Activated CD4-positive, alpha-beta T cell treated with anti-CD3 and anti-CD28 coated beads for 36 hours (primary cell): ENCODE measurements at regions of chr1 and their contacts with region 1.

Region 1: DNA sequence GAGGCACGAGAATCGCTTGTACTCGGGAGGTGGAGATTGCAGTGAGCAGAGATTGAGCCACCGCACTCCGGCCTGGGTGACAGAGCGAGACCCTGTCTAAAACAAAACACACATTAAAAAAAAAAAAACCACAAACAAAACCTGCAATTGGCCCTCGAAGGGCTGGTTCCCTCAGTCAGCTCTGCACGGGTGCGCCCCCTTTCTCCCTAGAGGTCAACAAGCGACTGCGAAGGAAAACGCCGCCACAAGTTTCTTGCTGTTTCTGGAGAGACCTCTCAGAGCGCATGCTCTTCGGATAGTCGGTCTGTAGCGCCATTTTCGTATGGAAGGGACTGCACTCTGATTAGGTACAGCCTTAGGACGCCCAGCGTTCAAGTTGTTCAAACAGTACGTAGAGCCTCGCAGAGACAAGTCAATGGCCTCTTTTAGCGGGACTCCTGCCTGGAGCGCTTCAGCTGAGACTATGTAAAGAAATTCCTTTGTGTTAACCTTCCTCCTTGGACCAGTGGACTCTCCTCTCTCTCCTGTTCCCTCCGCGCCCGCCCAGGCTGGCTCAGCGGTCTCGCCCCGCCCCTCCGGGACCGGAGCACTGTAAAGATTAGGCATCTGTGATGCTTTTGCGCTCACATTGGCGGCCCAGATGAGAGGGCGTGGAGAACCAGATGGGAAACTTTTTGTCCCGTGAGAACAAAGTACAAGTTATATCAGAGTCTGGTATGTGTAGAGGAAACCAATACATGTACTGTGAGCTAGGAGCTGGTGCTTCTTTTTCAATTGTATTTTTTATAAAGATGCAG is 1.0 kb upstream of the CDC14A start:
- DNase-seq: peak; percentile 94
- ATAC-seq: peak; percentile 77
- H3K4me3 Mint-ChIP-seq: peak overlapping the region; percentile 97
- H3K27ac Mint-ChIP-seq: peak overlapping the region; percentile 97
- H3K4me1 Mint-ChIP-seq: peaks cover 25% of the 10 kb centered on the region
- H3K27me3 Mint-ChIP-seq: no peaks in the 10 kb centered on the region

Region 2: GRCh38 chr1:99849744-99850458 is 501.4 kb before region 1 on chr1 and contains the start of gene AGL:
- CTCF ChIA-PET with region 1: no interaction called
- POLR2A ChIA-PET with region 1: no interaction called
- intact Hi-C with region 1: loop called in 1 of 2 experiments (anchors 2 kb)
- DNase-seq: peak; percentile 93
- ATAC-seq: peak; percentile 97
- H3K4me3 Mint-ChIP-seq: peak within 1 kb of the TSS; percentile 94
- H3K27ac Mint-ChIP-seq: peak within 1 kb of the TSS; percentile 96
- H3K4me1 Mint-ChIP-seq: peaks cover 35% of the 10 kb centered on the region
- H3K27me3 Mint-ChIP-seq: no peaks in the 10 kb centered on the region
- total RNA-seq, gene AGL: 14.6 to 18.3 TPM

Region 3: GRCh38 chr1:100249537-100250257 is 101.6 kb before region 1 on chr1 and contains the start of gene DBT:
- CTCF ChIA-PET with region 1: no interaction called
- POLR2A ChIA-PET with region 1: no interaction called
- intact Hi-C with region 1: loop called (anchors 1 kb)
- DNase-seq: peak; percentile 96
- ATAC-seq: peak; percentile 100
- H3K4me3 Mint-ChIP-seq: no peak within 1 kb of the TSS
- H3K27ac Mint-ChIP-seq: no peak within 1 kb of the TSS
- H3K4me1 Mint-ChIP-seq: peaks cover 16% of the 10 kb centered on the region
- H3K27me3 Mint-ChIP-seq: no peaks in the 10 kb centered on the region
- total RNA-seq, gene DBT: 11.0 to 12.8 TPM

Region 4: DNA sequence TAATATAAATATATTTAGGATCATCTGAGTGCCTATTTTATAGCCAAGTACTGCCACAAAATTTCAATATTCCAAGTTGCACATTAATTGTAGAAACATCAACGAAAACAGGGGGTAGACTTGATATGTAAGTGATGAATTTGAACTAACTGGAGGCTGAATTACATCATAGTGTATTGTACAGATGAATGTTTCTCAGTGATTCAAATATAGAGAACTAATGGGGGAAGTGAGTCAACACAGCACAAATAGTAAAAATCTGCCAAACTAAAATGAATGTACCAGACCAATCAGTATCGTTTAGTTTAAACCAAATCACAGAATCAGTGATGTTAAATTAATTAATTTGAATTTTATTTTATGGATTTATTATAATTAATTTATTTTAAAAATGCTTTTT is 42.5 kb before region 1 on chr1:
- CTCF ChIA-PET with region 1: interaction called, 6 read pairs
- POLR2A ChIA-PET with region 1: no interaction called
- intact Hi-C with region 1: loop called in 1 of 2 experiments (anchors 2 kb)
- DNase-seq: no peak
- ATAC-seq: peak; percentile 63
- H3K4me3 Mint-ChIP-seq: no peak overlapping the region
- H3K27ac Mint-ChIP-seq: no peak overlapping the region
- H3K4me1 Mint-ChIP-seq: peaks cover 17% of the 10 kb centered on the region
- H3K27me3 Mint-ChIP-seq: no peaks in the 10 kb centered on the region

Region 5: DNA sequence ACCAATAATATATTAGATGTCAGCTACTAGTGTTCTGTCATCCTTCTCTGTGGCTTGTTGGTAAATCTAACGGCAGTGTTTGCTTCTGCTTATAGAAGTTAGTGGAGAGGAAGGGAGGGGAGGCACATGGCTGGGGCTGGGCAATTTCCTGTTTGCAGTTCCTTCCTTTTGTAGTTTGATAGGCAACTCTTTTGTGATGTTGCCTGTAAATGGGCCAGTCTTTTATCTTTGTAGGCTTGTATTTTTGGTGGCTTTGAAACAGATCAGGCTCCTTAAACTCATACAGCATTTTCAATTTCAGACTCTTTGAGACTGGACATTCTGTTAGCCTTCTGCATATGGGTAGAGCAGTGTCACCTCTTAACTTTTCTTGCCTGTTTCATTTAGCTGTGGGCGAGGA is 49.1 kb after region 1 on chr1:
- CTCF ChIA-PET with region 1: interaction called, 7 read pairs
- POLR2A ChIA-PET with region 1: interaction called, 7 read pairs
- intact Hi-C with region 1: loop called in 1 of 2 experiments (anchors 10 kb)
- DNase-seq: peak; percentile 67
- ATAC-seq: peak; percentile 51
- H3K4me3 Mint-ChIP-seq: peak overlapping the region; percentile 60
- H3K27ac Mint-ChIP-seq: peak overlapping the region; percentile 92
- H3K4me1 Mint-ChIP-seq: peaks cover 84% of the 10 kb centered on the region
- H3K27me3 Mint-ChIP-seq: no peaks in the 10 kb centered on the region

Region 6: DNA sequence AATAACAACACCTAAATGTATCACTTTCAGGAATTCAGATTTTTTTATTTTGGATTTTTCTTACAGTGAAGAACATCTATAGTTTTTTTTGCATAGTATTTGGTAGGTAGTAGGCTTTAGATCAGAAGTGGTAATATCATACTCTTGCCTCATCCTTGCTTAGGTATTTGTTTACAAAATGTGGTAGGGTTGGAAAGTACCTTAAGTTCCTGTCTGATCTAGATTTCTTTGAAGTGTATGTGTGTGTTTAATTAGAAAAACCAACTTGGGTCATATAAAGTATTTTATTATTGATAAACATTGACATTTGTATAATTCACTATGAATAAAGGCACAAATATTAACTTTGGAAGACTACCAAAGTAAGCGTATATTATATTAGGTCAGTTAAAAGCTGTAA is 101.3 kb after region 1 on chr1:
- CTCF ChIA-PET with region 1: interaction called, 44 read pairs
- POLR2A ChIA-PET with region 1: interaction called, 3 read pairs
- intact Hi-C with region 1: loop called in 1 of 2 experiments (anchors 1 kb)
- DNase-seq: no peak
- ATAC-seq: peak; percentile 65
- H3K4me3 Mint-ChIP-seq: no peak overlapping the region
- H3K27ac Mint-ChIP-seq: peak overlapping the region; percentile 74
- H3K4me1 Mint-ChIP-seq: peaks cover 81% of the 10 kb centered on the region
- H3K27me3 Mint-ChIP-seq: no peaks in the 10 kb centered on the region